IMR-90 (cell line): ENCODE measurements at regions of chr6 and their contacts with region 1.

Region 1: DNA sequence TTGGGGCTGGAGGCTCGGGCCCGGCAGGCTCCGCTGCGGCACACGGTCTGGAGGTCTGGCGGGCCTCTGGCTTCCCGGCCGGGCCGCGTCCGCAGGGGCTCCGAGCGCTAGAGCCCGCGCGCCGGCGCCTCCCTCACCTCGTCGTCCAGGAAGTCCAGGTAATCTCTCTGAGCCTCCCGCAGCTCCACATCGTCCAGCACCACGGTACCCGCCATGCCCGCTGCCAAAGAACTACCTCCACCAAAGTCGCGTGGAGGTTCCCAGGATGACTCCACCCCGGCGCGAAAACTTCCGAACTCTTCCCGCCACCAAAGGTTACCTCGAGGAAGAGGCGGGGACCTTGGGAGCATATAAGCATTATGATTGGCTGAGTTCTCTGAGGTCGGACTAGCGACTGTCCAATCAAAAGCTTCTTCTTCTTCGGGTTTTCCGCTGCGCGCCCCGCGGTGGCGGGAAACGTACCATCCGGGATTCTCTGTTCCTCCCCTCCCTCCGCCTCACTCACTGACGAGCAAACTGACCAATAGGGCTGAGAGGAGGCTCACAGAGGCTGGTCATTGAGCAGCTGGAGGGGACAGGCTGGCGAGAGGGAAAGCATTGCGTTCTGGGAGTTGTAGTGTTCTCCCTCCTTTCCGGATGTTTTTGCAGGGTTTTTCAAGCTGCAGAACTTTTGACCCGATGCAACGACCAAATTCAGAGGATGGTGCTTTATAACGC is at the start of gene MCM3:
- DNase-seq: peak; percentile 99
- ATAC-seq: peak; percentile 99
- H3K4me3 ChIP-seq: peak within 1 kb of the TSS; percentile 65
- H3K27ac ChIP-seq: peak within 1 kb of the TSS; percentile 31; the same call in 1 of the 2 replicates
- H3K4me1 ChIP-seq: no peaks in the 10 kb centered on the region
- H3K27me3 ChIP-seq: no peaks in the 10 kb centered on the region
- CTCF ChIP-seq: peak; percentile 18; the same call in 1 of the 2 replicates
- POLR2A ChIP-seq: no peak; the same call in 1 of the 2 replicates
- RAD21 ChIP-seq: no peak
- total RNA-seq, gene MCM3: 66.5 and 76.7 TPM in 2 replicates

Region 2: GRCh38 chr6:52352239-52353008 is 67.8 kb after region 1 on chr6:
- CTCF ChIA-PET with region 1: interaction called, 3 read pairs
- POLR2A ChIA-PET with region 1: no interaction called
- dilution Hi-C with region 1: no loop called
- in situ Hi-C with region 1: no loop called
- intact Hi-C with region 1: loop called (anchors 2 kb)
- DNase-seq: peak; percentile 98
- ATAC-seq: peak; percentile 94
- H3K4me3 ChIP-seq: no peak overlapping the region; the same call in 1 of the 2 replicates
- H3K27ac ChIP-seq: peak overlapping the region; percentile 61
- H3K4me1 ChIP-seq: peaks cover 7% of the 10 kb centered on the region
- H3K27me3 ChIP-seq: peaks cover 4% of the 10 kb centered on the region; the same call in 1 of the 2 replicates
- CTCF ChIP-seq: no peak
- POLR2A ChIP-seq: no peak
- RAD21 ChIP-seq: no peak

Region 3: GRCh38 chr6:52361945-52362442 is 77.4 kb after region 1 on chr6 and contains the start of gene PAQR8:
- CTCF ChIA-PET with region 1: interaction called, 5 read pairs
- POLR2A ChIA-PET with region 1: no interaction called
- dilution Hi-C with region 1: no loop called
- in situ Hi-C with region 1: no loop called
- intact Hi-C with region 1: loop called (anchors 2 kb)
- DNase-seq: peak; percentile 51
- ATAC-seq: peak; percentile 96
- H3K4me3 ChIP-seq: peak within 1 kb of the TSS; percentile 86
- H3K27ac ChIP-seq: peak within 1 kb of the TSS; percentile 75
- H3K4me1 ChIP-seq: peaks cover 15% of the 10 kb centered on the region
- H3K27me3 ChIP-seq: no peaks in the 10 kb centered on the region
- CTCF ChIP-seq: no peak
- POLR2A ChIP-seq: no peak
- RAD21 ChIP-seq: no peak
- total RNA-seq, gene PAQR8: 1.6 and 1.7 TPM in 2 replicates

Region 4: DNA sequence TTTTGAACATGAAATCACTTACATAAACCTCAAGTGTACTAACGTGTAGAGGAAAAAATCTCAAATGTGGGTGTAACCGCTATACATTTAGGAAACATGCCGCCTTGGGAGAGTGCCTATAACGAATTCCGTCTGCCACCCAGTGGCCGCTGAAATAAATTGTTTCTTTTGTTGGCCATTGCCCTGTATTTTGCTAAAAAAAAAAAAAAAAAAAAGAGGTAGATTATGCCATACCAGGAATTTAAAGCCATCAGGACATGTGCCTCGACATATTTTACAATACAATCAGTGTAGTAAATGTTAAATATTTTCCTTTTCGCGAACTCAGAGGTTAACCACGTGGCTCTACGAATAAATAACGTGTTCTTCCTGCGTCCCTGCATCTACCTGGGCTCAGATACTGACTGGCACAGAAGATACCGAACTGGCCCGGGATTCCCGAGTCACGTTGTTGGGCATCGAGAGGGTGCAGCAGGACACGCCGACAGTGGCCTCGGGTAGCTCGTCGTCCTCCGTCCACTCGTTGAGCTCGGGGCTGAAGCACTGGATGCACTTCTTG is 1366.7 kb after region 1 on chr6:
- CTCF ChIA-PET with region 1: no interaction called
- POLR2A ChIA-PET with region 1: no interaction called
- dilution Hi-C with region 1: no loop called
- in situ Hi-C with region 1: no loop called
- intact Hi-C with region 1: no loop called
- DNase-seq: peak; percentile 78
- ATAC-seq: peak; percentile 44
- H3K4me3 ChIP-seq: peak overlapping the region; percentile 78
- H3K27ac ChIP-seq: peak overlapping the region; percentile 27; the same call in 1 of the 2 replicates
- H3K4me1 ChIP-seq: peaks cover 1% of the 10 kb centered on the region; the same call in 1 of the 2 replicates
- H3K27me3 ChIP-seq: peaks cover 10% of the 10 kb centered on the region; the same call in 1 of the 2 replicates
- CTCF ChIP-seq: peak; percentile 67
- POLR2A ChIP-seq: no peak
- RAD21 ChIP-seq: peak; percentile 74